ENCODE measurements at regions of chr17 and their contacts with region 1.

Region 1: DNA sequence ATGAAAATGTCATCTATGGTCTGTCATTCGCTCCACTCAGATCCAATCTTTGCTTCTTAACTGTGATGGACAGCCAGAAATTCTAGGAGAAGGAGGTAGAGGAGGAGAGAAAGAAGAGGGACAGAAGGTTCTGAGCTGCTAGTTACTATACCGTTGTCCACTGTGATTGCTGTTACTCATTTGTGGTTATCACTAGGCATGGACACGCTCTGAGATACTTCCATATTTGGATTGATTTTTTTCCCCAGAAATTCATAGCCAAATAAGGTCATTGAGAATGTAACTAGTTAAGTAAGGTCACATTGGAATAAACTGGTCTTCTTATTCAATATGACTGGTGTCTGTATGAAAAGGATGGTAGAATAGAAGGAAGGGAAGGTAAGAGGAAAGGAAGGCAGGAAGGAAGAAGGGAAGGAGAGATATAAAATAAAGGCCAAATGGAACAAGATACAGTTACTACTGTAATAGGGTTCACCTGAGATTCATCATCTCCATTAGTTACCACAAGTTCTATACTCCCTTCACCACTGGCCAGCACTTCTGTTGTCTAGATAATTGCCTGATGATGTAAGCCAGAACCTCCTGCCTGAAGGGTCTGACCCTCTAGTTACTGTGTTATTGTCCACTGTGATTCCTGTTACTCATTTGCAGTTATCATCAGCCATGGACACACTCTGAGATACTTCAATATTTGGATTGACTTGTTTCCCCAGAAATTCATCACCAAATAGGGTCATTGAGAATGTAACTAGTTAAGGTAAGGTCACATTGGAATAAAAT is 2.9 kb downstream of the KRTAP9-7 start:
- DNase-seq: no peak
- ATAC-seq: no peak
- H3K4me3 Mint-ChIP-seq: no peak overlapping the region
- H3K27ac Mint-ChIP-seq: no peak overlapping the region
- H3K4me1 Mint-ChIP-seq: no peaks in the 10 kb centered on the region
- H3K27me3 Mint-ChIP-seq: peaks cover 8% of the 10 kb centered on the region

Region 2: DNA sequence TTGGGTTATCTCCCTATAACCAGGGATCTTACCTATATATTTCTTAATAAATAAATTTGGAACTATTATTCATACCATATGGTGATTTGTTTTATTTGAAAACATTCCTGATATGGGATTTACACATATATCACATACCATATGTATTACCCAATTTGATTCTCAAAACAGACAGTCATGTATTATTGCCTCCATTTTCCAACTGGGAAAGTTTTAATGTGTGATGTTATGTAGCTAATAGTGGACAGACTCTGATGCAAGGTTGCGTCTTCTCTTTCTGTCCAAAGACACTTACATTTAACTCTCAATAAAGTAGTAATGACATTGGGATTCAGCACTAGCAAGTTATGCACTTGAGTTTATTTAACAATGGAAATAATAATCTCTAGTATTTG is 22.1 kb before region 1 on chr17:
- CTCF ChIA-PET with region 1: no interaction called
- POLR2A ChIA-PET with region 1: no interaction called
- intact Hi-C with region 1: loop called in 1 of 2 experiments (anchors 1 kb)
- DNase-seq: no peak
- ATAC-seq: no peak
- H3K4me3 Mint-ChIP-seq: no peak overlapping the region
- H3K27ac Mint-ChIP-seq: no peak overlapping the region
- H3K4me1 Mint-ChIP-seq: peaks cover 13% of the 10 kb centered on the region
- H3K27me3 Mint-ChIP-seq: peaks cover 4% of the 10 kb centered on the region

Region 3: DNA sequence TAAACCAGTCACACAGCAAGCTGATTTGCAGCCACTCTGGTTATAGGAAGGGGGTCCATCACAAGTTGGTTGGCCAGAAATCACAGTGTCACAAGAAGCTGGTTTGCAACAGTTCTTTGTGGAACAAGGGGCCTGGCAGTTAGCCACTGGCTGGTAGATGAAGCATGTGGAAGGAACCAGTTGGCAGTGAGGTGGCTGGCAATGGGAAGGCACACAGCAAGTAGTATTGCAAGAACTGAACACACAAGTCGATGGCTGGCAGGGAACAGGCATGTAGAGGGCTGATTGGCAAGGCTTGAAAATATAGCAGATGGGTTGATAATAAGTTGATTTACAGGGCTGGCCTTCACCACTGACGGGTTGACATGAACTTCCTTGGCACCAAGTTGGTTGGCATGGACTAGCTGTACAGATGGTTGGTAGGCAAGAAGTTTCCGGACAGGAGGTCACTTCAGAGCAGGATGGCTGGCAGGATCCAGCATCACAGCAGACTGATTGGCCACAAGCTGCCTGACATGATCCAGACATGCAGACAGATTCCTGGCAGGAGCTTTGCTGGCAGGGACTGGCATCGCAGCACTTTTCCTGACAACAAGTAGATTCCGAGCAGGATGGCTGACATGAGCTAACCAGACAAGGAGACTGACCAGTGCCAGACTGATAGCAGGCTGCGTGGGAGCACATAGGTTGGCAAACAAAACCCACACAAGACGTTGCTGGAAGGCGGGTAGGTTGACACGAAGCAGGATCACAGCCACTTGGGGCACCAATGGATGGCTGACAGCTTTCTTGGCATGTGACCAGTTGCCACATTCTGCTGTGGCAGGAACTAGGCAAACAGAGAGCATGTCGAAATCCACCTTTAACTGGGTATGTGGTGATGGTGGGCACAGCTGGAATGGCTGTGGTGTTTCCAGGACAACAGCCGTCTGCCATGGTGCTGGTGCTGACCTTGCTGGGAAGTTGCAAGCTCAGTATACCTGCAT is 23.8 kb after region 1 on chr17 and contains the start of gene KRTAP29-1:
- CTCF ChIA-PET with region 1: no interaction called
- POLR2A ChIA-PET with region 1: no interaction called
- intact Hi-C with region 1: no loop called
- DNase-seq: no peak
- ATAC-seq: no peak
- H3K4me3 Mint-ChIP-seq: no peak within 1 kb of the TSS
- H3K27ac Mint-ChIP-seq: no peak within 1 kb of the TSS
- H3K4me1 Mint-ChIP-seq: peaks cover 14% of the 10 kb centered on the region
- H3K27me3 Mint-ChIP-seq: no peaks in the 10 kb centered on the region
- total RNA-seq, gene KRTAP29-1: not detected